Colonic mucosa (tissue), 4 donors: ENCODE measurements at regions of chr9 and their contacts with region 1.

Region 1: DNA sequence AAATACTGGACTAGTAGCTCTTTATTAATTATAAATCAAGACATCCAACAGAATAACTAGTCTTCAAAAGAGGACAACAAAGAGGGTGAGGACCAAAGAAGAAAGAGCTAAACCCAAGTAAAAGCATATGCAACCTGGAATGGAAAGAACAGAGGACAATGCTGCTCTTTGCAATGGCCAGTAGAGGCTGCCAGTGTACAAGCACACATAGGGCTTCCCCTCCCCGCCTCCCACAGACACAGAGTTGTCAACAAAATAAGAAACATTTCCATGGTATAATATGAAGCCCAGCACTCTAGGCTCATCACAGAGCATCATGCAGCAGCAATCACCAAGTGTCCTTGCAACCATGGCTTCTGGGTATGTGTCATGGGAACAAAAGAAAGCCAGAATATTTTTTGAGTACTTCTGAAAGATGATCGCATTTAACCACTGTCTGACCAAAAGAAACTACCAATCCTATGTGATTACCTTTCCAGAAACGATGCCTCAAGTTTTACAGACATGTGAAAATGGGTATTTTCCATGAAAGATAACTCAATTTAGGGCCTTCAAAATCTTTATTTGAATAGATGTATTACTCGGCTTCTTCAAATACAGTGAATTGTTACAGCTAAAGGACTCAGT is 58.1 kb downstream of the RFX3 start:
- DNase-seq: peak; percentile 45
- H3K4me3 ChIP-seq: no peak overlapping the region
- H3K27ac ChIP-seq: no peak overlapping the region
- H3K4me1 ChIP-seq: no peaks in the 10 kb centered on the region
- H3K27me3 ChIP-seq: no peaks in the 10 kb centered on the region
- CTCF ChIP-seq: peak; percentile 74

Region 2: GRCh38 chr9:3647652-3648051 is 179.9 kb after region 1 on chr9:
- intact Hi-C with region 1: loop called (anchors 10 kb)
- DNase-seq: no peak
- H3K4me3 ChIP-seq: no peak overlapping the region
- H3K27ac ChIP-seq: no peak overlapping the region
- H3K4me1 ChIP-seq: no peaks in the 10 kb centered on the region
- H3K27me3 ChIP-seq: no peaks in the 10 kb centered on the region
- CTCF ChIP-seq: no peak